Left lung (tissue), 14 donors: ENCODE measurements at regions of chr1 and their contacts with region 1.

Region 1: DNA sequence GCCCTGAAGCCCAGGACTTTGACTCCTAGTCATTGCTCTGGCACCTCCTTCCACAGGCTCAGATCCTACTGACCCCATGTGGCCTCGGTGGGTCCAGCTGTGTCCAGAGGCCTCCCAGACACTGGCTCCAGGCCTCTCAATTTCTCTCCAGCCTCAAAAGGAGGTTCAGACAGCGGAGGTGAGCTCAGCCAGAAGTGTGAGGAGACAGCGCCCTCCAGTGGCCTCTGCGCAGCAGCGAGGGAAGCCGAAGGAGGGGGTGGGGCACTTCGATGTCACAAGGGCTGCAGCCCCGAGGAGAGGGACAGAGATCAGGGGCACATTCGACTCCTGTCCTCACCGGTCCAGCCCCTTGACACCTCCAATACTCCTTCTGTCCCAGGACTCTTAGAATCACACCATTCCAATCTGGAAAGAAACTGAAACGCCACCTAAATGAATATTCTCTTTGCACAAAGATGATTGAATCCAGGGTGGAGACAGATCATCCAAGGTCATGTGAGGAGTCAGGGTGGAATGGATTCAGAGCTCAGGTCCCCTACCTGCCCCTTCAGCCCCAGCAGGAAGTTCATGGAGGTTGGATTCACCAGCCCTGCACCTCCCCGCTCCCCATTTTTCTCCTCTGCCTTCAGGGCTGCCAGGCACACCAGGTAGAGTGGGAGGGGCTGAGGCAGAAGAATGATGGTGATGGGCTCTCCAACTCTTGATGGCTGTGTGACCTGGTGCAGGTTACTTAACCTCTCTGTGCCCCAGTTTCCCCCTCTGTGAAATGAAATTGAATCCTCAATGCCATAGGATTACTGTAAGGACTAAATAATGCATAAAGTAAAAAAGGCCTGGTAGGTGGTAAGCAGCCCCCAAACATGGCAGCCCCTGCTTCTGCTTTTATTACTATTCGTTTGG is 34.8 kb upstream of the ZBTB40 start:
- DNase-seq: peak; percentile 54 to 85 (median 76)
- ATAC-seq: peak; percentile 62
- H3K4me3 ChIP-seq: no peak overlapping the region
- H3K27ac ChIP-seq: no peak overlapping the region
- H3K4me1 ChIP-seq: peaks cover 9 to 13% of the 10 kb centered on the region in 2 donors
- H3K27me3 ChIP-seq: peaks cover 6 to 38% of the 10 kb centered on the region in 2 donors
- CTCF ChIP-seq: peak; percentile 75 to 79

Region 2: DNA sequence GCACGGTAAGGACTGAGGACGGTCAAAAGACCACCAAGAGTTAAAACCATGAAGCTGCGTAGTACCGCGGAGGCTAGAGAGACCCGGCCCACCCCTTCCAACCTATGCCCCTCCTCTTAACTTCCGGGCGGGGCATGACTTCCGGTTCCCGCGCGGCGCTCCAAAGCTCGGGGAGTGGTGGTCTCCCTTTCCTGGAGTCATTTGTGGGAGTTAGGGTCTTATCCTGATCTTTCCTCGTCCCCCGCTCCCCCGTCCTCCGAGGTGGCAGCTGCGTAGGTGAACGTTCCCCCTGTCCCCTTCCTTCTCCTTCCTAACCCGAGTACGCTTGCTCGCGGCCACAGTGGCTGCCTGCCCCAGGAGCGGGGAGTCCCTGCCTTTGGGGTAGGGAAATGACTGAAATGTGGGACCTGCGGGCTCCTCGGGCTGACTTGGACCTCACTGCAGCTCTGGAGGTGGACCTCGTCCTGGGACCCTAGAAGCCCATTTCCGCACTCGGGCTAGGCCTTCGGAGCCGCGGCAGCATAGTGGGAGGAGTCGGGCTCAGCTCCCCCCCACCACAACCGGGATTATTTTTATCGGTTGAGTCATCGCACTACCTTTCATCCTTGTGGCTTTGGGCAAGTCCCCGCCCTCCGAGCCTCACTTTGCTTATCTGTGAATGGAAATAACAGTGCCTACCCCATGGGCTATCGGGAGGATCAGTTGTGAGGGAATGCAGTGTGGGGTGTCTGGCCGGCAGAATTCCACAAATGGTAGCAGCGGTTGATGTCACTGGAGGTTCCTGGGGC is 391.2 kb before region 1 on chr1:
- intact Hi-C with region 1: no loop called
- DNase-seq: peak; percentile 78 to 93 (median 90)
- ATAC-seq: peak; percentile 85
- H3K4me3 ChIP-seq: peak overlapping the region; percentile 75 to 82
- H3K27ac ChIP-seq: peak overlapping the region; percentile 97 to 98
- H3K4me1 ChIP-seq: peaks cover 0 to 29% of the 10 kb centered on the region in 2 donors
- H3K27me3 ChIP-seq: no peaks in the 10 kb centered on the region
- CTCF ChIP-seq: no peak

Region 3: GRCh38 chr1:22309572-22309971 is 107.2 kb before region 1 on chr1:
- intact Hi-C with region 1: no loop called
- DNase-seq: no peak
- ATAC-seq: no peak
- H3K4me3 ChIP-seq: no peak overlapping the region
- H3K27ac ChIP-seq: no peak overlapping the region
- H3K4me1 ChIP-seq: no peaks in the 10 kb centered on the region
- H3K27me3 ChIP-seq: peaks cover 4 to 31% of the 10 kb centered on the region in 2 donors
- CTCF ChIP-seq: no peak

Region 4: DNA sequence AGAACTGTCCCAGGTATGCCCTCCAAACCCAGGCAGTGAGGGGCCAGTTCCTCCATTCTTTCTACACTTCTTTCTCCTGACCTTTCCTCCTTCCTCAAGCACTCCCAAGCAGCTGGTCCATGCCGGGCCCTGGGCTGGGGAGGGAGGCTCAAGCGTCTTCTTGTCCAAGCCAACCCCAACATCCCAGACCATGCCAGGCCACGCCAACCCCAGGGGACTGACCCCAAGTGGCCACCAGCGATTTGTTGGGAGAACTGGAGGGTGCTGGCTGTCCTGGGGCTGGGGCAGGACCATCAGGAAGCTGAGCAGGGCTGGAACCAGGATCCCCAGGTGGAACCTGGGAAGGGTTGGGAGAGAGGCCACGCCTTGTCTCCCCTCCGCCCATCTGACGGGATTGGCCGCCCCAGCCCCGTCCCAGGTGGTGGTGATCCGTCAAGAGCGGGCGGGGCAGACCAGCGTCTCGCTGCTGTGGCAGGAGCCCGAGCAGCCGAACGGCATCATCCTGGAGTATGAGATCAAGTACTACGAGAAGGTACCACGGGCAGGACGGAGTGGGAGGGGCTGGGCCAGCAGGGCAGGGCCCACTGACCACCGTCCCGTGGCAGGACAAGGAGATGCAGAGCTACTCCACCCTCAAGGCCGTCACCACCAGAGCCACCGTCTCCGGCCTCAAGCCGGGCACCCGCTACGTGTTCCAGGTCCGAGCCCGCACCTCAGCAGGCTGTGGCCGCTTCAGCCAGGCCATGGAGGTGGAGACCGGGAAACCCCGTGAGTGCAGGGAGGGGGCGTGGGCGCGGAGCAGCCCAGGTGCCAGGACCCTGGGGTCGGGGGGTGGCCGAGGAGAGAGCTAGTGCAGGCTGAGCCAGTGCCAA is 176.3 kb after region 1 on chr1:
- intact Hi-C with region 1: no loop called
- DNase-seq: no peak
- ATAC-seq: peak; percentile 61
- H3K4me3 ChIP-seq: no peak overlapping the region
- H3K27ac ChIP-seq: no peak overlapping the region
- H3K4me1 ChIP-seq: no peaks in the 10 kb centered on the region
- H3K27me3 ChIP-seq: peaks cover 17 to 90% of the 10 kb centered on the region in 2 donors
- CTCF ChIP-seq: no peak

Region 5: DNA sequence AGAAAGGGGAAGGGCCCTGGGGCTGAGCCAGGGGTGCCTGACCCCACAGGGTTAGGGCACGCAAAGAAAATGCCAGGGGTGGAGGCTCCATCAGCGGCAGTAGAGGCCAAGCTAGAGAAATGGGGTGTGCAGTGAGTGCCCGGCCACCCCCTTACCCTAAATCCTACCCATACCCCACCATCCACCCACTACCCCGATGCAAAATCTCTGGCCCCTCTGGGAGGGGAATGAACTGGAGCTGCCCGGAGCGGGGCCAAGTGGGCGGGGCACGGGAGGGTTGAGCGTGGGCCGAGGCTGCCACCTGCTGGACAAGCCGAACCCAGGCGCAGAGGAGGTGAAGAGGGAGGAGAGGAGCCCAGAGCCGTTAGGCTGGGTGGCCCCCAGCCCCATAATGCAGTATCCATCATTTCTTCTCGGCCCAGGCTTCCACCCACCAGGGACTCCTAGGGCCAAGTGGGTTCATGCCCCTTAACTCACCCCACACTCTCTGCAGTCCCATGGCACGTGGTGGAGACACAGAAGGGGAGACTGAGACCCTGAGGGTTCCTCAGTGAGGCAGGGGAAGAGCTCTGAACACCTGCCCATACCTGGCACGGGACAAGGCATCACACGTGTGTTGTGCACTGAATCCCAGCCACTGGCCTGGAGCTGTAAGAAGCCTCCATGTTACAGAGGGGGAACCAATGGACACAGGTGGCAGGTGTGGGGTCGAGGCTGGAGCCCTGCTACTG is 225.3 kb after region 1 on chr1:
- intact Hi-C with region 1: loop called (anchors 2 to 10 kb)
- DNase-seq: peak; percentile 58 to 93 (median 79)
- ATAC-seq: peak; percentile 90
- H3K4me3 ChIP-seq: no peak overlapping the region
- H3K27ac ChIP-seq: no peak overlapping the region
- H3K4me1 ChIP-seq: peaks cover 4 to 10% of the 10 kb centered on the region in 2 donors
- H3K27me3 ChIP-seq: peaks cover 0 to 52% of the 10 kb centered on the region in 2 donors
- CTCF ChIP-seq: peak; percentile 84 to 90